ENCODE measurements at regions of chr15 and their contacts with region 1.

Region 1: DNA sequence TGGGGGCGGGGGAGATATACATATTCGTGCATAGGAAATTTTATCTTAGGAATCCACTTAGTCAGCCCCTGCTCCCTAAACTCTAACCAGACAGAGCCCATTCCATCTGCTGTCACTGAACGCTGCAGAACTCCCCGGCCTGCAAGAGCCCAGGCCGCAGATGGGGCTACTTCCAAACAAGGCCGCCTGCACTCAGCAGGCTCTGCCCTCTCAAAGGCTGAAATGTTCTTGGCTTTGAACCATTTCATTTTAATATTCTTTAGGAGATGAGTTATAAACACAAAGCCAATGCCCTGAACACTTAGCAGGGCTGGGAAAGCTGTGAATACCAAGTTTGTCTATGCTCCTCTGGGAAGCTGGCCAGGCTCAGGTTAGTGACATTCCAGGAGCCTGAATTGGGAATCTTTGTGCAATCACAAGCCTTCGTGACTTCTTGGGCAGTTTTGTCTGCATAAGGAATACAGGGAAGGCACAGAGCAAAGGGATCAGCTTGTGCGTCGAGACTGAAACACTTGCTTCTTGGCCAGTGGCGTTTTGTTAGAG is 65.0 kb downstream of the SYNM start:
- DNase-seq: no peak
- ATAC-seq: peak in 2 of 4 donors; percentile 47 to 51
- H3K4me3 ChIP-seq: no peak overlapping the region
- H3K27ac ChIP-seq: peak overlapping the region; percentile 94
- H3K4me1 ChIP-seq: peaks cover 77% of the 10 kb centered on the region
- H3K27me3 ChIP-seq: no peaks in the 10 kb centered on the region
- CTCF ChIP-seq: no peak

Region 2: GRCh38 chr15:99104788-99105513 is 64.9 kb before region 1 on chr15 and contains the start of gene SYNM:
- intact Hi-C with region 1: loop called (anchors 5 kb)
- DNase-seq: peak; percentile 86 to 94
- ATAC-seq: peak; percentile 79 to 88 (median 82)
- H3K4me3 ChIP-seq: peak within 1 kb of the TSS; percentile 71
- H3K27ac ChIP-seq: peak within 1 kb of the TSS; percentile 96
- H3K4me1 ChIP-seq: peaks cover 30% of the 10 kb centered on the region
- H3K27me3 ChIP-seq: no peaks in the 10 kb centered on the region
- CTCF ChIP-seq: peak; percentile 95
- total RNA-seq, gene SYNM: 288 to 380 (median 349) TPM

Region 3: GRCh38 chr15:99123706-99124451 is 46.0 kb before region 1 on chr15:
- intact Hi-C with region 1: loop called (anchors 5 kb)
- DNase-seq: peak; percentile 91 to 96
- ATAC-seq: peak; percentile 81 to 87 (median 84)
- H3K4me3 ChIP-seq: peak overlapping the region; percentile 54
- H3K27ac ChIP-seq: peak overlapping the region; percentile 96
- H3K4me1 ChIP-seq: peaks cover 93% of the 10 kb centered on the region
- H3K27me3 ChIP-seq: no peaks in the 10 kb centered on the region
- CTCF ChIP-seq: no peak

Region 4: DNA sequence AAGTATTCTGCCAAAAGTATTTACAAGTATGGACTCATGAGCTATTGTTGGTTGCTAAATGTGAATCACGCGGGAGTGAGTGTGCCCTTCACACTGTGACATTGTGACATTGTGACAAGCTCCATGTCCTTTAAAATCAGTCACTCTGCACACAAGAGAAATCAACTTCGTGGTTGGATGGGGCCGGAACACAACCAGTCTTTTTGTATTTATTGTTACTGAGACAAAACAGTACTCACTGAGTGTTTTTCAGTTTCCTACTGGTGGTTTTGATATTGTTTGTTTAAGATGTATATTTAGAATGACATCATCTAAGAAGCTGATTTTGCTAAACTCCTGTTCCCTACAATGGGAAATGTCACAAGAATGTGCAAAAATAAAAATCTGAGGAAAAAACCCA is 34.6 kb before region 1 on chr15:
- intact Hi-C with region 1: loop called in 1 of 2 experiments (anchors 5 kb)
- DNase-seq: no peak
- ATAC-seq: peak; percentile 60 to 81 (median 68)
- H3K4me3 ChIP-seq: no peak overlapping the region
- H3K27ac ChIP-seq: peak overlapping the region; percentile 96
- H3K4me1 ChIP-seq: peaks cover 45% of the 10 kb centered on the region
- H3K27me3 ChIP-seq: no peaks in the 10 kb centered on the region
- CTCF ChIP-seq: no peak

Region 5: GRCh38 chr15:99157456-99157855 is 12.4 kb before region 1 on chr15:
- intact Hi-C with region 1: no loop called
- DNase-seq: no peak
- ATAC-seq: no peak
- H3K4me3 ChIP-seq: no peak overlapping the region
- H3K27ac ChIP-seq: no peak overlapping the region
- H3K4me1 ChIP-seq: no peaks in the 10 kb centered on the region
- H3K27me3 ChIP-seq: no peaks in the 10 kb centered on the region
- CTCF ChIP-seq: no peak

Region 6: DNA sequence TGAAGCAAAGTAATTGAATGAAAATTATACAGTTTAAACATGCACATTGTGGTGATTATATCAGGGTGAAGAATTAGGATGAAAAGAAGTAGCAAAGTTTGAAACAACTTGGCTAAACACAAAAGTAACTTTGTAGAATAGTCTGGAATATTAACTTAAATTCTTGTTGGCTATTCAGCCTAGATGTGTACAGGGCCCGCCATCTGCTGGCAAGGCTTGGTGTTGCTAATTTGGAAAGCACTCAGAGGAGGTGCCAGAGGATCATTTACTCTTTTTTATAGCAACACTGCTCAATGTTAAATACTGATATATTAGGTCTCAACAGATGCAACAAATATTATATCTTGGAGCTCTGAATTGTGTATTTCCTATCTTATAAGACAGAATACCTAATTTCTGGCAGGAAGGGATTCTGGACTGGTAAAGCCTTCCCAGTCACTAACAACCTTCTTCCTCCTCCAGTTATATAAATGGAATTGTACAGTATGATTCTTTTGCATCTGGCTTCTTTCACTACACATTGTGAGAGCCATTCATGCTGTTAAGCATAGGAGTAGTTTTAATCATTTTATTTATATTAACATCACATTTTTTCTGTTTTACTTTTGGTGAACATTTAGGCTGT is 43.5 kb after region 1 on chr15:
- intact Hi-C with region 1: loop called (anchors 5 kb)
- DNase-seq: peak; percentile 81 to 88
- ATAC-seq: peak; percentile 82 to 91 (median 83)
- H3K4me3 ChIP-seq: no peak overlapping the region
- H3K27ac ChIP-seq: peak overlapping the region; percentile 75
- H3K4me1 ChIP-seq: peaks cover 17% of the 10 kb centered on the region
- H3K27me3 ChIP-seq: no peaks in the 10 kb centered on the region
- CTCF ChIP-seq: peak; percentile 96

Measured in psoas muscle (tissue), 8 donors.